SK-N-SH (cell line): ENCODE measurements at regions of chr22 and their contacts with region 1.

Region 1: DNA sequence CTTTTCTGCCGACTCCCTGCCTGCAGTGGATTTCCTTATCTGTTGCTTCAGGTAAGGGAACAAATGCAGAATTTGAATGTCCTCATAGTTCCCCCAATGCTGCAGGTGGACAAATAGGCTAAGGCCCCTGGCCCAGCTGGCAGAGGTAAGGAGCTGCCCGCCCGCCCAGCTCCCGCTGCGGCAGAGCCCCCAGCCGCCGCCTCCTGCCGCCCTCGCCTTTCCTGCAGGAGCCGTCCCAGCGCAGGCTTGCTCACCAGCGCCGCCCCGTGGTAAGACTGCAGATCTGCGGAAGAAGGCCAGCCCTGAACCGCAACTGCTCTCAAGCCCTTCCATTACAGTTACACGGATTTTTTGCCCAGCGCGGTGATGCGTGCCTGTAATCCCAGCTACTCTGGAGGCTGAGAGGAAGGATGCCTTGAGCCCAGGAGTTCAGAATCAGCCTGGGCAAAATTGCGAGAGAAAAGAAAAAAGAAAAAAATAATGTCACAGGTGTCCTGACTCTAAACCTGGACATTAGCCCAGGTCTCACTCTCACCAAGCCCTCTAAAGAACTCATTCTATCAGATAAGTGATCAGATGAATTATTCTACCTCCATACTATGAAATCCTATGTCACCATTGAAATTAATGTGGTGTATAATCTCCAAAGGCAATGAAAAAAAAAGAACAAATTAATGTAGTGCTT is 51.2 kb upstream of the EMID1 start:
- DNase-seq: peak; percentile 91
- H3K4me3 ChIP-seq: peak overlapping the region; percentile 6 to 31; a peak in 3 of 4 replicates
- H3K27ac ChIP-seq: no peak overlapping the region
- H3K4me1 ChIP-seq: peaks cover 0 to 4% of the 10 kb centered on the region in 2 experiments; a peak in 2 of 4 replicates
- H3K27me3 ChIP-seq: no peaks in the 10 kb centered on the region
- CTCF ChIP-seq: peak; percentile 91
- EP300 ChIP-seq: no peak
- RAD21 ChIP-seq: peak; percentile 80

Region 2: DNA sequence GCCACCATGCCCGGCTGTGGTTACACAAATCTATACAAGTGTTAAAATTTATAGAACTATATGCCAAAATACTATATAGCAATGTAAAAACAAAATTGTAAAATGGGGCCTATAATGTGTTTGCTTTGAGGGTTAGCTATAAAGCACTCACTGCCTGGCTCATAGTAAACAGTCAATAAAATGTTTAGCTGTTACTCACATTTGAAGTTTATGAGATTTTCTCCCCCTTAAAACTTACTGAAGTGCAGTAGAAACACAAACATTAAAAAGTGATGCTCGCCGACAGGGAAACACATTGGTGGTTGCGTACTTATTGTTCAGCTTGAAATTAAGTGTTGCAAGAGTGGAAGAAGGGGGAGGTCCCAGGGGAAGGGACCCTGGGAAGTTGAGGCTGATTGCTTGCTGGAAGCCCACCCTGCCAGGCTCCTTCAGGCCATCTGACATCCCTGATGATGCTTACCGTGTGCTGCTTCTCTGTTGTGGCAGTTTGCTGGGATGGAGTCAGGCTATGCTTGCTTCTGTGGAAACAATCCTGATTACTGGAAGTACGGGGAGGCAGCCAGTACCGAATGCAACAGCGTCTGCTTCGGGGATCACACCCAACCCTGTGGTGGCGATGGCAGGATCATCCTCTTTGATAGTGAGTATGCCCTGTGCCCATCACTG is 29.6 kb before region 1 on chr22:
- CTCF ChIA-PET with region 1: interaction called, 12 read pairs
- POLR2A ChIA-PET with region 1: no interaction called
- DNase-seq: no peak
- H3K4me3 ChIP-seq: no peak overlapping the region
- H3K27ac ChIP-seq: no peak overlapping the region
- H3K4me1 ChIP-seq: peaks cover 0 to 6% of the 10 kb centered on the region in 2 experiments; a peak in 1 of 4 replicates
- H3K27me3 ChIP-seq: no peaks in the 10 kb centered on the region
- CTCF ChIP-seq: no peak
- EP300 ChIP-seq: no peak
- RAD21 ChIP-seq: no peak

Region 3: GRCh38 chr22:29139965-29140782 is 14.3 kb before region 1 on chr22:
- CTCF ChIA-PET with region 1: interaction called, 22 read pairs
- POLR2A ChIA-PET with region 1: no interaction called
- DNase-seq: no peak
- H3K4me3 ChIP-seq: no peak overlapping the region
- H3K27ac ChIP-seq: no peak overlapping the region
- H3K4me1 ChIP-seq: no peaks in the 10 kb centered on the region
- H3K27me3 ChIP-seq: no peaks in the 10 kb centered on the region
- CTCF ChIP-seq: no peak
- EP300 ChIP-seq: no peak
- RAD21 ChIP-seq: no peak

Region 4: DNA sequence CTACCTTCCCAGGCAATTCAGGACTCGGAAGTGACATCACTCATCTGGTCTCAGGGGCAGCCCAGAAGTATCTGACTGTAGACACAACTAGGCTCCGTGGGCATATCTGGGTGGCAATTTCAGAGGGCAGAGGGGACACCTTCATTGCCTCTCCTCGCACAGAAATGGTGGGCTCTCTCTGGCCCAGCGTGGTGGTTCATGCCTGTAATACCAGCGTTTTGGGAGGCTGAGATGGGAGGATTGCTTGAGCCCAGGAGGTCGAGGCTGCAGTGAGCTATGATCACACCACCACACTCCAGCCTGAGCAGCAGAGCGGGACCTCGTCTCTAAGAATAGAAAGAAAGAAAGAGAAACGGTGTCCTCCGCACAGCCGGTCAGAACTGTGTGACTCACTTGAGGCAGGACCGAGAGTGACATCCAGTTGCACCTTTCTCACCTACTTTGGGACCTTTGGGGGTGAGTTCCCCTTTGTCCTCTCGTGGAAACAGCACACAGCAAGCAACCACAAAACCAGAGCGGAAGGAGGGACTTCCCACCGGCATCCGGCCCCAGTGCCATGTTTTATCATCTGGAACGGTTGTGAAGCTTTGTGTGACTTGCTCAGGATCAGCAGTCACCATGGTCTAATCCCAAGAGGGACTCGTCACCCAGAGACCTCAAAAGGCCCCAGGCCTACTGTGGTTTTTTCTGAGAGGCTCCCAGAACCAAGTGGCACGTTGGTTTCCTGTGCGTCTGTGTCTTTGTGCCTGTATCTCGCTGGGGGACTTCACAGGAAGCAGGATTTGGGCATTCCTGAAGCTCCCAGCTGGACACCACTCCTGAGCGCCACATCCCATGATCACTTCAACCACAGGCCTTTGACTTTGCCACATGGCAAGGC is 12.8 kb after region 1 on chr22:
- CTCF ChIA-PET with region 1: interaction called, 20 read pairs
- POLR2A ChIA-PET with region 1: no interaction called
- DNase-seq: no peak
- H3K4me3 ChIP-seq: no peak overlapping the region
- H3K27ac ChIP-seq: no peak overlapping the region
- H3K4me1 ChIP-seq: no peaks in the 10 kb centered on the region
- H3K27me3 ChIP-seq: no peaks in the 10 kb centered on the region; the same call in 1 of the 2 replicates
- CTCF ChIP-seq: no peak
- EP300 ChIP-seq: no peak
- RAD21 ChIP-seq: no peak

Region 5: GRCh38 chr22:29175312-29175835 is 20.9 kb after region 1 on chr22:
- CTCF ChIA-PET with region 1: interaction called, 10 read pairs
- POLR2A ChIA-PET with region 1: no interaction called
- DNase-seq: no peak
- H3K4me3 ChIP-seq: no peak overlapping the region
- H3K27ac ChIP-seq: no peak overlapping the region
- H3K4me1 ChIP-seq: no peaks in the 10 kb centered on the region
- H3K27me3 ChIP-seq: no peaks in the 10 kb centered on the region
- CTCF ChIP-seq: no peak
- EP300 ChIP-seq: no peak
- RAD21 ChIP-seq: no peak

Region 6: DNA sequence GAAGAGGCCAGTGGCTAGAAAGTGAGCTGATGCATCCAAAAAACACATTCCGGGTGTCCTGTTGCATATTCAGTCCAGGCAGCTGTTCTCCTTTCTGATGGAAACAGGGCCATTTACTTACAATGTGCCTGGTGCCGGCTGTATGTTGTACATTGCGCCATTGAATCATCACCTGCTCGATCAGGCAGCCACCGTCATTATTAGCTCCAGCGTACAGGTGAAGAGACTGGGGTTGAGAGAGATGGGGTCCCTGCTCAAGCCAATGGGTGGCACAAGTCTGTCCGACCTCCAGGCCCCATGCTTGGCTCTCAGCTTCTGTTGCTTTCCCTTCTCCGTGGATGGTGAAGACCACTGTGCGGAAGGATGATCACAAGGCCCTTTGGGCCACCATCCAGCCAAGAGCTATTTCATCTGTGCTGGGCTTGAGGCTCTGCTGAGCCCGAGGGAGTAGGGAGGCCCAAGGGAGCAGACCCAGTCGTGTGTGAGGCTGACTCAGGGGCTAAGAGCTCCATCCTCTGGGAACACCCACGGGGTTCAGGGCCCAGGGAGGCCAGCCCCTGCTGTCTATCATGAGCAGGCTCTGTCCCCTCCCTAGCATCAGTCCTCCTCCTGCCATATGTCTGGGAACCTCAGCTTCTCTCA is 30.5 kb after region 1 on chr22:
- CTCF ChIA-PET with region 1: interaction called, 12 read pairs
- POLR2A ChIA-PET with region 1: no interaction called
- DNase-seq: no peak
- H3K4me3 ChIP-seq: no peak overlapping the region
- H3K27ac ChIP-seq: no peak overlapping the region
- H3K4me1 ChIP-seq: no peaks in the 10 kb centered on the region; a peak in 1 of 4 replicates
- H3K27me3 ChIP-seq: no peaks in the 10 kb centered on the region
- CTCF ChIP-seq: no peak
- EP300 ChIP-seq: no peak
- RAD21 ChIP-seq: no peak

Region 7: DNA sequence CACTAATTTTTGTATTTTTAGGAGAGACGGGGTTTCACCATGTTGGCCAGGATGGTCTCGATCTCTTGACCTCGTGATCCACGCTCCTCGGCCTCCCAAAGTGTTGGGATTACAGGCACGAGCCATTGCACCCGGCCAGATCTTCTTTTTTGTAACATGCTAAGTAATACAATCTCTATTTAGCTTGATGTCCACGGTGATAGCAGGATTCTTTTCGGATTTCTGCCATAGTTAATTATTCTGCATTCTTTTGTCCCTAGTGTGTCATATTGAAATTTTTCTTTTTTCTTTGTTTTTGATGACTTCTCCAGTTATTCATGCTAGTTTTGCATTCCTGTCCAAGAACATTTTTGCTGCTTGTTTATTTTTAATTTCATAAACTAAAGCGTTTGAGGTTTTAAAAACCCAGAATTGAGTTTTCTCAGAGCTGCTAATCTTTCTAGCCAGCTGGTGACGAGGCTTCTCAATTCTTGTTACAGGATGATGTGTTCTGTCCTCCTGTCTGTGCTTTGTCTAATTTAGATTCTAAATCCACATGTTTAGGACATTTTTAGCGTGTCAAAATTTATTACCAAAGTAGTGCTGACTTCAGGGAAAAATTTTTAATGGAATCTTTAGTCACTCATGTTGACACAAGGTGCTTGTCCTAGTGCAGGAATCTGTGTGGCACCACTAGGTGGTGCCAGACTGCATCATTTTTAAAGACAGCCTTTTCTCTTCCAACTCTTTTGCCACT is 470.8 kb after region 1 on chr22:
- CTCF ChIA-PET with region 1: no interaction called
- POLR2A ChIA-PET with region 1: no interaction called
- DNase-seq: peak; percentile 49
- H3K4me3 ChIP-seq: peak overlapping the region in 1 of 2 experiments; percentile 15; a peak in 1 of 4 replicates
- H3K27ac ChIP-seq: peak overlapping the region; percentile 24 to 93; a peak in 3 of 4 replicates
- H3K4me1 ChIP-seq: peaks cover 5 to 59% of the 10 kb centered on the region in 2 experiments; a peak in 3 of 4 replicates
- H3K27me3 ChIP-seq: no peaks in the 10 kb centered on the region
- CTCF ChIP-seq: peak; percentile 96
- EP300 ChIP-seq: no peak
- RAD21 ChIP-seq: peak; percentile 71